ENCODE measurements at regions of chr2 and their contacts with region 1.

Region 1: DNA sequence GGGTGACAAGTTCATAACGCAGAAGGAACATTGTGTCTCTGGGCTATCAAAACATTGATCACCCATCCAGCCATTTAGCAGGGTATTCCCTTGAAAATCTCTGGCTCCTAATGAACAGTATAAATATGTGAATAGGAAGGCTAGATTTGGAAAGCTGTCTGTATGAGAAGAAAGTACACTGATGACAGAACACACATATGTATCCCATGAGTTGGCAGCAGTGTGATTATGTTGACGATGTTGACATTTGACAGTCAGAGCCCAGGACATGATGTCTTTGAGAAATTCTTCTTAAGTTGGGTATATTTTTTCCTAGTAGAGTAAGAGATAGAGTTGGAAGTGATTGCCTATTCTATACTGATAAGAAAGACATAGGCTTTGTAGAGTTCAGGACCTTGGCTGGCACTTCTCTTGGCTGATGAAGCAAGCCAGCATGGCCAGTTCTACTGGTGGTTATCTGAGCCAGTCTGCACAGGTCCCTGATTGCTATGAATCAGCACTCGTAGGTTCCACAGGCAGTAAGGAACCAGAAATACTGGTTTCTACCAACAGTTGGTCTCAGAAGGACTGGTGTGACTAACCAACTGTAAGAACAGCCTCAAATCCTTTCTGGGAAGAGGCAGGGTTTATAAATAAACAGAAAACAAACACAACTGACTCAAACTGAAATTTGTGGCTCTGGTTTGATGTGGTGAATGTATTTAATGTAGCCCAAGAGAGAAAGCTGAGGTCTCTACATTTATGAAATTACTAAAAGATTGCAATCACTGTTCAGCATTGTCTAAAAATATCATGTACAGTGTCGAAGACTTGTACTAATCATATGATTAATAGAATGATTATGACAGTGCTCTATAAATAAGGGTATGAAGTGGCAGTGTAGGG is 43.9 kb upstream of the RAPH1 start:
- DNase-seq: peak; percentile 72
- H3K4me3 Mint-ChIP-seq: no peak overlapping the region
- H3K27ac Mint-ChIP-seq: peak overlapping the region; percentile 16
- H3K4me1 Mint-ChIP-seq: peaks cover 29% of the 10 kb centered on the region
- H3K27me3 Mint-ChIP-seq: peaks cover 12% of the 10 kb centered on the region

Region 2: DNA sequence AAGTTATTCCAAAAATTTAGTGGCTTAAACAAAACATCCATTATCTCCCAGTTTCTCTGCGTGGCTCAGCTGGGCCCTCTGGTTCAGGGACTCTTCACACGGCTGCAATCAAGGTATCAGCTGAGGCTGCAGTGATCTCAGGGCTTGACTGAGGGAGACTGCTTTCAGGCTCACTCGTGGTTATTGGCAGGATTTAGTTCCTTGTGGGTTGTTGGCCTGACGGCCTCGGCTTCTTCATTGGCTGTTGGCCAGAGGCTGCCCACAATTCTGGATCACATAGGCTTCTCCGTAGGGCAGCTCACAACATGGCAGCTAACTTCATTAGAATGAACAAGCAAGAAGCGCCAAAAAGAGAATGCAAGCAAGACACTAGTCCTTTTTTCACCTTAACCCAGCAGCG is 160.7 kb before region 1 on chr2:
- CTCF ChIA-PET with region 1: no interaction called
- POLR2A ChIA-PET with region 1: no interaction called
- intact Hi-C with region 1: no loop called
- DNase-seq: no peak
- H3K4me3 Mint-ChIP-seq: no peak overlapping the region
- H3K27ac Mint-ChIP-seq: no peak overlapping the region
- H3K4me1 Mint-ChIP-seq: no peaks in the 10 kb centered on the region
- H3K27me3 Mint-ChIP-seq: no peaks in the 10 kb centered on the region

Region 3: DNA sequence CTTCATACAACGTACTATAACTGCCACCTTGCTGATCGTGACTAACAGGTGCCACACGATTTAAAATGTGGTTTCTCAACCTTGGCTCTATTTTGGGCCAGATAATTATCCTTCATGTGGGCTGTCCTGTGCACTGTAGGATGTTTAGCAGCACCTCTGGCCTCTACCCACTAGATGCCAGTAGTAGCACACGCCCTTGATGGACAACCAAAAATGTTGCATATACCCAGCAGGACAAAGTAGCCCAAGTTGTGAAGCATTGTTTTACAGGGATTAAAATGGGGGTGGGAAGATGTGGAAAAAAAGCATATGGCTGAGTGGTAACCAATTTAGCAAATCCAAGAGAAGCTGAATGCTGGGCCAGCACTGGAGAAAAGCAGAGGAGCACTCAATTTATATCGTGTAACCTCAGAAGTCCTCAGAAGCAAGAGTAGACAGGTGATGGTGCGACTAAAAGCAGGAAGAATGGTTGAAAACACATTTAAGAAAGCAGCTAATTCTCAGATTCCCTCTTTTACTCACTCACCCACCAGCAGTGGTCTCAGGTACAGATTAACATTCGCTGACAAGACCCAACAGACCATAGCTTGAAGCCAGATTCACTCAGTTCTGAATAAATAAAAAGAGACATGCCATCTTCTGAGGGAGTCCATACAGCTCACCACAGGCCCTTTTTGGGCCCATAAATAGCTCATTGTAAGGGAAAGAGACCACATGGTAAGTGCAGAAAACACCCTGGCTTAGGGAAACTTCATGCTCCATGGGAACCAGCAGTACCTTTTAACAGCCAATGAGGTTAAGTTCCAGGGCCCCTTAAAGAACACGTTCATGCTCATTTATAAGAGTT is 94.5 kb before region 1 on chr2:
- CTCF ChIA-PET with region 1: no interaction called
- POLR2A ChIA-PET with region 1: no interaction called
- intact Hi-C with region 1: loop called (anchors 5 kb)
- DNase-seq: peak; percentile 59
- H3K4me3 Mint-ChIP-seq: no peak overlapping the region
- H3K27ac Mint-ChIP-seq: peak overlapping the region; percentile 1
- H3K4me1 Mint-ChIP-seq: peaks cover 10% of the 10 kb centered on the region
- H3K27me3 Mint-ChIP-seq: no peaks in the 10 kb centered on the region

Region 4: DNA sequence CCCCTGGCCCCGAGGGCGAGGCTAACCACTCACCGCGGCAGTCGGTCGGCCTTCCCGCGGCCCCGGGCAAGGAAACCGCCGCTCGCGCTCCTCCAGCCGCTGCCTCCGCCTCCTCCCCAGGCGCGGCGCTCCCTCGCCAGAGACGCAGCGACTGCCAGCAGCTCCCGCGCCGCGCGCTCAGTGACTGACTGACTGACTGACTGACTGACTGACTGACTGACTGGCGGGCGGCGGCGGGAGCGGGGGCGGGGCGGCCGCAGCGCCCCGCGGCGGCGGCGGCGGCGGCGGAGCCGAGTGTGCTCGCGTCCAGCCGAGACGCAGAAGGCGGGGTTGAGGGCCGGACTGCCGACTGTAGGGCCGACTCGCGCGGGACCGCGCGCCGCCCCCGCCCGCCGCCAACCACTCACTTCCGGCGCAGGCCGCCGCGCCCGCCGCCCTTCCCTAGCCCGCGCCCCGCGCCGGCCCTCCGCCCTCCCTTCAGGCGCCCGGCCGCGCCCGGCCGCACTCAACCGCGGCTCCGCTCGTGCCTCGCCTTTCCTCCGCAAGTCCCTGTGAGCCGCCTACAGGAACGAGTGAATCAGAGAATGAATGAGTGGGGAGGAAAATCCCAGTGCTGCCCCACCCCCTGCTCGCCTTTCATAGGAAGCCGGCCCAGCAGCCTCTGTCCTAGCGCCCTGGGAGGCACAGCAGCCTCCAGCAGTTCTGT is 43.8 kb before region 1 on chr2 and contains the start of gene RAPH1:
- CTCF ChIA-PET with region 1: no interaction called
- POLR2A ChIA-PET with region 1: no interaction called
- intact Hi-C with region 1: loop called (anchors 1 kb)
- DNase-seq: peak; percentile 79
- H3K4me3 Mint-ChIP-seq: peak within 1 kb of the TSS; percentile 82
- H3K27ac Mint-ChIP-seq: peak within 1 kb of the TSS; percentile 67
- H3K4me1 Mint-ChIP-seq: peaks cover 31% of the 10 kb centered on the region
- H3K27me3 Mint-ChIP-seq: peaks cover 14% of the 10 kb centered on the region
- total RNA-seq, gene RAPH1: 11.5 to 13.1 TPM

Region 5: GRCh38 chr2:203599509-203599908 is 20.5 kb after region 1 on chr2:
- CTCF ChIA-PET with region 1: interaction called, 3 read pairs
- POLR2A ChIA-PET with region 1: no interaction called
- intact Hi-C with region 1: loop called (anchors 1 kb)
- DNase-seq: no peak
- H3K4me3 Mint-ChIP-seq: no peak overlapping the region
- H3K27ac Mint-ChIP-seq: no peak overlapping the region
- H3K4me1 Mint-ChIP-seq: peaks cover 20% of the 10 kb centered on the region
- H3K27me3 Mint-ChIP-seq: peaks cover 3% of the 10 kb centered on the region

Region 6: GRCh38 chr2:203659331-203660049 is 80.5 kb after region 1 on chr2:
- CTCF ChIA-PET with region 1: no interaction called
- POLR2A ChIA-PET with region 1: no interaction called
- intact Hi-C with region 1: no loop called
- DNase-seq: no peak
- H3K4me3 Mint-ChIP-seq: no peak overlapping the region
- H3K27ac Mint-ChIP-seq: no peak overlapping the region
- H3K4me1 Mint-ChIP-seq: peaks cover 22% of the 10 kb centered on the region
- H3K27me3 Mint-ChIP-seq: no peaks in the 10 kb centered on the region

Region 7: GRCh38 chr2:203824057-203824456 is 245.1 kb after region 1 on chr2:
- CTCF ChIA-PET with region 1: no interaction called
- POLR2A ChIA-PET with region 1: no interaction called
- intact Hi-C with region 1: no loop called
- DNase-seq: peak; percentile 67
- H3K4me3 Mint-ChIP-seq: no peak overlapping the region
- H3K27ac Mint-ChIP-seq: peak overlapping the region; percentile 46
- H3K4me1 Mint-ChIP-seq: peaks cover 44% of the 10 kb centered on the region
- H3K27me3 Mint-ChIP-seq: no peaks in the 10 kb centered on the region

Region 8: DNA sequence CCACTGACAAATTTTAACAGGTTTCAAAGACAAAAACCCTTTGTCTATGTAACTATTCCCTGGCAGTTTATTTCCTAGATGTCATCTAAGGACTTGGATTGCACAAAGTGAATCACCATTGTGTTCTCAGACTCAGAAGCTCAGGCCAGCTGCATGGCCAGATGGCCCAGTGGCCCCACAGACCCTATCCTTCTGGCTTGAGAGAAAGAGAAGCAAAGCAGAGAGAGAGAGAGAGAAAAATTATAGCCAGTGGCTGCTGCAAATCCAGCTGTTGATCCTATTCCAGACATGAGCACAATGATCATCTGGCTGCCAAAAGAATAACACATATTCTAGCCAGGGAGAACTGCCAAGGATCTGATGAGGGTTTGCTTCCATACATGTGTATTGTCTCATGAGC is 314.4 kb after region 1 on chr2:
- CTCF ChIA-PET with region 1: no interaction called
- POLR2A ChIA-PET with region 1: no interaction called
- intact Hi-C with region 1: loop called (anchors 5 kb)
- DNase-seq: no peak
- H3K4me3 Mint-ChIP-seq: peak overlapping the region; percentile 14
- H3K27ac Mint-ChIP-seq: peak overlapping the region; percentile 84
- H3K4me1 Mint-ChIP-seq: peaks cover 77% of the 10 kb centered on the region
- H3K27me3 Mint-ChIP-seq: no peaks in the 10 kb centered on the region